AG04449 (cell line): ENCODE measurements at regions of chr17 and their contacts with region 1.

Region 1: DNA sequence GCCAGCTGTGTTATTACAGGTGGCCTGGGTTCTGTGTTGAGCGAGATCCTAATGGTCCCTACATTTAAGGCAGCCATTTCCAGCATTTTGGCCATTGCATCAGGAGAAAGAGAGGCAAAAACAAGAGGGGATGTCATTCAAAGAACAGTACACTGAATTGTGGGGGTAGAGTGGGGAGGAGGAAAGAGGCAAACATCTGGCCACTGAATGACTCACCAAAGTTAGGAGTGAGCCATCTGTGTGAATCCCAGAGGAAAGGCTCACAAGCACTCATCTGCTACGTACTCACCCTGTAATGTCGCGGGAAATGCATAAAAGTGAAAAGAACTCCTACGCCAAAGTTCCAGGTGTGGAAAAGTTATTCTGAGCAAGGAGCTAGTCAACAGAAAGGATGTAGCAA is 16.7 kb downstream of the KRABD2 start:
- DNase-seq: no peak
- H3K4me3 ChIP-seq: no peak overlapping the region
- CTCF ChIP-seq: no peak

Region 2: DNA sequence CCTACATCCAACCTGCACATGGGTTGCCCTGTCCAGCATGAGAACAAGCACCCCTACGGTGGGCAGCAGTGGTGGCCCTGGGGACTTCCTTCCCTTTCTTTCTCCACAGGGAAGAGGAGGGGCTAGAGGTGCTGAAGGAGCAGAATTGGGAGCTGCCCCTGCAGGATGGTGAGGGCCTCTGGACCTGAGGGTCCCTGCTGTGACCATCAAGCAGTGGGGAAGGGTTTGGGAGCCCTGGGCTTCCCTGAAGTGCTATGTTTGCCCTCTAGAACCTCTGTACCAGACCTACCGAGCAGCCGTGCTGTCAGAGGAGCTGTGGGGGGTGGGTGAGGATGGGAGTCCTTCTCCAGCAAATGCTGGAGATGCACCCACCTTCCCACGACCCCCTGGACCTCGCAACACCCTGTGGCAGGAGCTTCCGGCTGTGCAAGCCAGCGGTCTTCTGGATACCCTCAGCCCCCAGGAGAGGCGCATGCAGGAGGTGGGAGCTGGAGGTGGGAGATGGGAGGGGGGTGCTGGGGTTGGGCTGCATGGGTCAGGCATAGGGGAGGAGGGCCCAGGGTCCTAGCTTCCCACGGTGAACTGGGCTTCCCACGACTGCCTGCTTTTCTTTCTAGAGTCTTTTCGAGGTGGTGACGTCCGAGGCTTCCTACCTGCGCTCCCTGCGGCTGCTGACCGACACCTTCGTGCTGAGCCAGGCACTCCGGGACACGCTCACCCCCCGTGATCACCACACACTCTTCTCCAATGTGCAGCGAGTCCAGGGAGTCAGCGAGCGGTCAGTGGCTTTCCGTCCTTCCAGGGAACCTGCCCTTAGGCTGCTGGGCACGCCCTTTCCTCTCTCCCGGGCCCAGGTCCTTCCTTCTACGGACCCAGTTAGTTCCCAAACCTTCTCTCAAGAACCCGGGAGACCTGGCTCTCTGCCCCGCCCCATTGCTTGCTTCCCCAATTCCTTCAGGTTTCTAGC is 44.7 kb before region 1 on chr17:
- CTCF ChIA-PET with region 1: no interaction called
- POLR2A ChIA-PET with region 1: no interaction called
- DNase-seq: no peak
- H3K4me3 ChIP-seq: no peak overlapping the region
- CTCF ChIP-seq: no peak

Region 3: GRCh38 chr17:8376271-8377067 is 16.7 kb after region 1 on chr17 and contains the start of gene KRABD2:
- CTCF ChIA-PET with region 1: interaction called, 23 read pairs
- POLR2A ChIA-PET with region 1: interaction called, 7 read pairs
- DNase-seq: no peak
- H3K4me3 ChIP-seq: peak within 1 kb of the TSS; percentile 83
- CTCF ChIP-seq: peak; percentile 90